Naive thymus-derived CD8-positive, alpha-beta T cell (primary cell): ENCODE measurements at regions of chr20 and their contacts with region 1.

Region 1: GRCh38 chr20:36064658-36065426 is 89.7 kb upstream of the EPB41L1 start:
- DNase-seq: peak; percentile 83 to 99 (median 92)
- ATAC-seq: peak; percentile 94 to 97
- H3K4me3 Mint-ChIP-seq: peak overlapping the region; percentile 84 to 92 (median 88)
- H3K27ac Mint-ChIP-seq: peak overlapping the region; percentile 57 to 94 (median 87)
- H3K4me1 Mint-ChIP-seq: peaks cover 0 to 5% (median 4%) of the 10 kb centered on the region in 4 donors
- H3K27me3 Mint-ChIP-seq: peaks cover 0 to 5% (median 0%) of the 10 kb centered on the region in 5 donors

Region 2: GRCh38 chr20:36050436-36051317 is 14.2 kb before region 1 on chr20:
- POLR2A ChIA-PET with region 1: interaction called, 13 read pairs
- DNase-seq: peak; percentile 74 to 94 (median 83)
- ATAC-seq: peak; percentile 94 to 97
- H3K4me3 Mint-ChIP-seq: peak overlapping the region; percentile 87 to 97 (median 92)
- H3K27ac Mint-ChIP-seq: peak overlapping the region; percentile 83 to 97 (median 93)
- H3K4me1 Mint-ChIP-seq: peaks cover 20 to 53% (median 49%) of the 10 kb centered on the region in 4 donors
- H3K27me3 Mint-ChIP-seq: peaks cover 0 to 7% (median 2%) of the 10 kb centered on the region in 5 donors

Region 3: DNA sequence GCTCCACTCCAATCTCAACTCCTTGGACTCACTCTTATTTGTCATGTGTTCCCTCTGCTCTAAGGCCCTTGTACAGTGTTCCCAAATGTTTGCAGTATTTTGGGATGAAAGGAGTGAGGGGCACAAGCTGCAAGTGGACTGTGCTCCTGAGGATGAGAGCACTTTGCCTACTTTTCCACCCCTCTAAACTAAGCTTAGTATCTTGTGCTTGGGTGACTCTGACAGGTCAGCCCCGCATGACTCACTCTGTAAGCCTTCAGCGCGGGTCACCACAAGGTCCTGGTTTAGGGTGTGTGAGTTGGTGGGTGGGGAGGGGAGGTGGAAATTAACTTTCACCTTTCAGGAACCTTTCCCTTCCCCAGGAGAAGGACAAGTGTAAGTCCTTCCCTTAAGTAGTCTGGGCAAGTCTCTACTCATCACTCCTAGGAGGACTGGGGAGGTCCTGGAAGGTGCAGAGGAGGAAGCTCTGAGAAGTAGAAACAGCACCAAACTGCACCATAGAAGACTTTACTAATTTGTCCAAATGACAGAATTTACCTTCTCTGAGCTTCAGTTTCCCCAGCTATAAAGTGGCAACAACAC is 20.9 kb after region 1 on chr20:
- POLR2A ChIA-PET with region 1: no interaction called
- DNase-seq: no peak
- ATAC-seq: no peak
- H3K4me3 Mint-ChIP-seq: no peak overlapping the region
- H3K27ac Mint-ChIP-seq: no peak overlapping the region
- H3K4me1 Mint-ChIP-seq: peaks cover 0 to 2% (median 0%) of the 10 kb centered on the region in 4 donors
- H3K27me3 Mint-ChIP-seq: peaks cover 9 to 36% (median 26%) of the 10 kb centered on the region in 5 donors